T-cell (primary cell): ENCODE measurements at regions of chr17 and their contacts with region 1.

Region 1: DNA sequence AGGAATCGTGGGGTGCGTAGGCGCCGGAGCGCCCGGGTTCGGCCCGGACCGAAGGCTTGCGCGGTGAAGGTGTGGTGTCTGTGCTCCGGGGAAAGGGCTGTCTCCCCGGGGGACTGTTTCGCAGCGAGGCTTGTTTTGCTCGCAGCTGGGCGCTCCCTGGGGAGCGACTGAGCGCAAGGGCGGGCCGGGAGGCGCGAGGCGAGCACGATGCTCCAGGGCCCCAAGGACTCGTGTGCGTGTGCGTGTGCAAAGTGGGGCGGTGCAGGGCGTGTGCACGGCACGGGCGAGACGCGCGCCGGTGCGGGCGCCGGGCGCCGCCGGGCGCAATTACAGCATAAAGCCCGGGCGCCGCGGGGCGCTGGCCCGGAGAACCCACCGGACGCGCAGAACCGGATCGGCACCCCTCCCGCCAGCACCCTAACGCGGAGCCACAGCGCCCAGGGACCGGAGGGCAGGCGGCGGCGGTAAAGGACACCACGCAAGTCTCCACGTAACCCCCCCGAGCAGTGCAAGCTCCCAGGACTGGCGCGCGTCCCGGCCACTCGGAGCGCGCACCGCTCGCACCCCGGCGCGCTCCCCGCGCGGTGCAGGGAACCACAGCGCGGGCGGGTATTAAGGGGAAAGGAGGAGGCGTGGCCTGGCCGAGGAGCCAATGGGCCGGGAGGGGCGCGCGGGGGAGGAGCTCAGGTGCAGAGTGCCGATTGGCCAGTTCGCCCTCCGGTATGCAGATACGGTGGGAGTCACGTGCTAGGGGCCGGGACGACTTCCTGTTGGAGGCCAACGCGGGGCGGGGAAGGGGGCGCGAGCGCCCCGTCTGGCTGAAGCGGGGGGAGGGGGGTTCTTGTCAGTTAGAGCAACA is at the start of gene TNRC6C:
- DNase-seq: peak; percentile 99 to 100 (median 100)
- ATAC-seq: peak; percentile 83 to 95 (median 85)
- H3K4me3 ChIP-seq: peak within 1 kb of the TSS; percentile 92 to 94
- H3K4me3 Mint-ChIP-seq: peak within 1 kb of the TSS; percentile 94 to 100 (median 99)
- H3K27ac ChIP-seq: peak within 1 kb of the TSS; percentile 77
- H3K27ac Mint-ChIP-seq: peak within 1 kb of the TSS; percentile 92 to 98
- H3K4me1 ChIP-seq: peaks cover 18 to 37% of the 10 kb centered on the region in 2 experiments
- H3K4me1 Mint-ChIP-seq: peaks cover 38 to 49% (median 45%) of the 10 kb centered on the region in 3 donors
- H3K27me3 ChIP-seq: peaks cover 0 to 3% of the 10 kb centered on the region in 2 experiments
- H3K27me3 Mint-ChIP-seq: no peaks in the 10 kb centered on the region
- total RNA-seq, gene TNRC6C: 87.1 to 116 (median 94.3) TPM

Region 2: GRCh38 chr17:77391668-77392375 is 566.3 kb before region 1 on chr17:
- CTCF ChIA-PET with region 1: no interaction called
- POLR2A ChIA-PET with region 1: interaction called in 1 of 2 experiments, 10 read pairs
- DNase-seq: peak in 13 of 35 experiments; percentile 27 to 68 (median 32)
- ATAC-seq: peak; percentile 38 to 82 (median 74)
- H3K4me3 ChIP-seq: peak overlapping the region; percentile 2 to 58
- H3K4me3 Mint-ChIP-seq: peak overlapping the region; percentile 42 to 86 (median 62)
- H3K27ac ChIP-seq: peak overlapping the region; percentile 44
- H3K27ac Mint-ChIP-seq: peak overlapping the region; percentile 93 to 96
- H3K4me1 ChIP-seq: peaks cover 56 to 93% of the 10 kb centered on the region in 2 experiments
- H3K4me1 Mint-ChIP-seq: peaks cover 85 to 87% (median 86%) of the 10 kb centered on the region in 3 donors
- H3K27me3 ChIP-seq: no peaks in the 10 kb centered on the region
- H3K27me3 Mint-ChIP-seq: no peaks in the 10 kb centered on the region

Region 3: DNA sequence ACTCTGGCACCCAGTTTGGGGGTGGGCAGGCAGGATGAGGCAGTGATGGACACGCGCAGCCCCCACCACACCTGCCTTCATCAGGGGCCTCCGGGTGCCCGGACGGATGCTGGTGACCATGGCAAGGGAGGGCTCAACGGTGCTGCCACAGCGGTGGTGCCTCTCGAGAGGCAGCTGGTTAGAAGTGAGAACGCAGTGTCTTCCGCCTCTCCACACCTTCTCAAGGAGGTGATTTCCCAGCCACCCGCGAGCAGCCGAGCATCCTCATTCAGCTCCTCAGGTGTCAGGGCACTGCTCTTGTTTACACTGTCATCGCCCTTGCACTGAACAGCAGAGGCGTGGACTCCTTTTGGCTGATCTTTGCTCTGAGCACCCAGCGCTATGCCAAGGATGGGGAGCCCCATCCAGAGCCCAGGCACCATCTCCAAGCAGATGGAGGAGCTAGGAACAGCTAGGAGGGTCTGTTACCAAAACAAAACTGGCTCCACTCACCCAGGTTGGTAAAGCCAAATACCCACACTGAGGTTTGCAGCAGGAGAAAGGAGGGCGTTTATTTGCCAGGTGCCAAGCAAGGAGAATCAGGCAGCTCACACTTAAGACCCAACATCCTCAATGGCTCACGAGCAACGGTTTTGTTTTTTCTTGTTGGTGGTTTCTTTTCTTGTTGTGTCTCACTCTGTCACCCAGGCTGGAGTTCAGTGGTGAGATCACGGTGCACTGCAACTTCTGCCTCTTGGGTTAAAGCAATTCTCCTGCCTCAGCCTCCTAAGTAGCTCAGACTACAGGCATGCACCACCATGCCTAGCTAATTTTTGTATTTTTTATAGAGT is 173.9 kb before region 1 on chr17:
- CTCF ChIA-PET with region 1: interaction called in 1 of 2 experiments, 4 read pairs
- POLR2A ChIA-PET with region 1: interaction called, 6 to 15 read pairs
- DNase-seq: peak; percentile 42 to 91 (median 79)
- ATAC-seq: peak; percentile 86 to 97 (median 95)
- H3K4me3 ChIP-seq: peak overlapping the region in 1 of 2 donors; percentile 5
- H3K4me3 Mint-ChIP-seq: peak overlapping the region; percentile 37 to 64 (median 59)
- H3K27ac ChIP-seq: peak overlapping the region; percentile 95
- H3K27ac Mint-ChIP-seq: peak overlapping the region; percentile 89 to 98
- H3K4me1 ChIP-seq: peaks cover 2 to 44% of the 10 kb centered on the region in 2 experiments
- H3K4me1 Mint-ChIP-seq: peaks cover 11 to 29% (median 17%) of the 10 kb centered on the region in 3 donors
- H3K27me3 ChIP-seq: peaks cover 0 to 6% of the 10 kb centered on the region in 2 experiments
- H3K27me3 Mint-ChIP-seq: no peaks in the 10 kb centered on the region

Region 4: DNA sequence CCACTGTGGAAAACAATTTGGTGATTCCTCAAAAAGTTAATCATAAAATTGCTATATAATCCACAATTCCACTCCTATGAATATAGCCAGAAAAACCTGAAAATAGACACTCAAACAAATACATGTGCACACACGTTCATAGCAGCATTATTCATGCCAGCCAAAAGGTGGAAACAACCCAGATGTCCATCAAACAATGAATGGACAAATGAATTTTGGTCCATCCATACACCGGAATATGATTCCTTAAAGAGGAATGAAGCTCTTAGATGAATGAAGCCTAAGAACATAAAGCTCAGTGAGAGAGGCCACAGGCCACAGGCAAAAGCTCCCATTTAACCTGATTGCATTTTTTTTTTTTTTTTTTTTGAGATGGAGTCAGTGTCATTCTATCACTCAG is 114.2 kb before region 1 on chr17:
- CTCF ChIA-PET with region 1: interaction called in 1 of 2 experiments, 3 read pairs
- POLR2A ChIA-PET with region 1: interaction called, 3 to 16 read pairs
- DNase-seq: peak in 1 of 35 experiments; percentile 37
- ATAC-seq: peak in 2 of 4 experiments; percentile 2 to 15
- H3K4me3 ChIP-seq: no peak overlapping the region
- H3K4me3 Mint-ChIP-seq: peak overlapping the region; percentile 17 to 56 (median 28)
- H3K27ac ChIP-seq: peak overlapping the region; percentile 72
- H3K27ac Mint-ChIP-seq: peak overlapping the region; percentile 87 to 90
- H3K4me1 ChIP-seq: peaks cover 18 to 64% of the 10 kb centered on the region in 2 experiments
- H3K4me1 Mint-ChIP-seq: peaks cover 44 to 70% (median 45%) of the 10 kb centered on the region in 3 donors
- H3K27me3 ChIP-seq: no peaks in the 10 kb centered on the region
- H3K27me3 Mint-ChIP-seq: no peaks in the 10 kb centered on the region

Region 5: DNA sequence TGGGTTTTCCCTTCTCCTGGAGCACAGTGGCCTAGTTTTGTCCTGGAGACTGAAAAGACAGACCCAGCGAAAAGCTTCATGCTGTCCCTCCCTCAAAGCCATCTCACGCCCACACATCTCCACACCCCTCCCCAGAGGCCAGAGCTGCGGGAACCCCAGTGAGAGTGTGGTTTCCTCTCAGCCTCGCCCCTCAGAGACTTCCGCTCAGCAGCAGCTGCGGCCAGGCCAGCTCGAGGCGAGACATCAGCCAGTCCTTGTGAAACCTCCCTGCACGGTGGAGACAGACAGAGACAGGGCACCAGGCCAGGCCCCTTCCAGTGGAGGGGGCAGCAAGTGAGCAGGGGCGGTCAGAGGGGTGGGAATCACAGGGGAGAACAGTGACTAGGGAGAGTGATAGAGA is 76.5 kb before region 1 on chr17:
- CTCF ChIA-PET with region 1: interaction called in 1 of 2 experiments, 5 read pairs
- POLR2A ChIA-PET with region 1: interaction called, 6 to 11 read pairs
- DNase-seq: peak; percentile 56 to 85 (median 68)
- ATAC-seq: peak; percentile 19 to 71 (median 58)
- H3K4me3 ChIP-seq: peak overlapping the region; percentile 48 to 66
- H3K4me3 Mint-ChIP-seq: peak overlapping the region; percentile 73 to 87 (median 78)
- H3K27ac ChIP-seq: peak overlapping the region; percentile 99
- H3K27ac Mint-ChIP-seq: peak overlapping the region; percentile 95 to 98
- H3K4me1 ChIP-seq: peaks cover 49 to 87% of the 10 kb centered on the region in 2 experiments
- H3K4me1 Mint-ChIP-seq: peaks cover 89 to 98% (median 90%) of the 10 kb centered on the region in 3 donors
- H3K27me3 ChIP-seq: no peaks in the 10 kb centered on the region
- H3K27me3 Mint-ChIP-seq: no peaks in the 10 kb centered on the region

Region 6: DNA sequence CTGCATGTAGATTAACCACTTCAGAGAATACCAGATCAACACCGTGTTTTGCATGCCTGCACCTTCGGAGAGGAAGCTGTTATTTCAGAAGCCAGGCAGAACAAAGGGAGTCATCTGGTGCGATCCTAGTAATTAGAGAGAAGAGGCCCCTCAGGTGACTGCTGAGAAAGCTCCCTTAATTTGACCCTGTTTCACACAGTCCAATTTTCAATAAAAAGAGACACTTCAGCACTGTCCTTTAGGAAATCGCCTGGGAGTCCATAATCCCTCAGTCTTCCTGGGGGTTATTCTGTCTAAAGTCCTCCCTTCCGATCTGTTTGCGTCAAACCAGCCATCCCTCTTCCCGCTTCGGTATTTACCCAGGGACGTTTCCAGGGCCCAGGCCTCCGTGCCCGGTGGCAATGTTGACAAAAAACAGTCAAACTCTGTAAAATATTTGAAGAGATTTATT is 22.9 kb before region 1 on chr17:
- CTCF ChIA-PET with region 1: no interaction called
- POLR2A ChIA-PET with region 1: interaction called, 5 to 11 read pairs
- DNase-seq: peak in 6 of 35 experiments; percentile 2 to 43 (median 18)
- ATAC-seq: peak in 3 of 4 experiments; percentile 43 to 77 (median 56)
- H3K4me3 ChIP-seq: peak overlapping the region in 1 of 2 donors; percentile 10
- H3K4me3 Mint-ChIP-seq: peak overlapping the region in 2 of 3 donors; percentile 13 to 23
- H3K27ac ChIP-seq: no peak overlapping the region
- H3K27ac Mint-ChIP-seq: peak overlapping the region in 1 of 2 donors; percentile 48
- H3K4me1 ChIP-seq: peaks cover 6 to 10% of the 10 kb centered on the region in 2 experiments
- H3K4me1 Mint-ChIP-seq: peaks cover 25 to 41% (median 27%) of the 10 kb centered on the region in 3 donors
- H3K27me3 ChIP-seq: peaks cover 0 to 12% of the 10 kb centered on the region in 2 experiments
- H3K27me3 Mint-ChIP-seq: peaks cover 0 to 8% of the 10 kb centered on the region in 2 donors

Region 7: GRCh38 chr17:78013683-78014467 is 55.8 kb after region 1 on chr17:
- CTCF ChIA-PET with region 1: interaction called in 1 of 2 experiments, 12 read pairs
- POLR2A ChIA-PET with region 1: interaction called in 1 of 2 experiments, 4 read pairs
- DNase-seq: peak in 31 of 35 experiments; percentile 11 to 85 (median 41)
- ATAC-seq: peak; percentile 54 to 74 (median 58)
- H3K4me3 ChIP-seq: no peak overlapping the region
- H3K4me3 Mint-ChIP-seq: no peak overlapping the region
- H3K27ac ChIP-seq: no peak overlapping the region
- H3K27ac Mint-ChIP-seq: peak overlapping the region; percentile 20 to 45
- H3K4me1 ChIP-seq: peaks cover 0 to 3% of the 10 kb centered on the region in 2 experiments
- H3K4me1 Mint-ChIP-seq: peaks cover 37 to 38% (median 38%) of the 10 kb centered on the region in 3 donors
- H3K27me3 ChIP-seq: no peaks in the 10 kb centered on the region
- H3K27me3 Mint-ChIP-seq: no peaks in the 10 kb centered on the region

Region 8: DNA sequence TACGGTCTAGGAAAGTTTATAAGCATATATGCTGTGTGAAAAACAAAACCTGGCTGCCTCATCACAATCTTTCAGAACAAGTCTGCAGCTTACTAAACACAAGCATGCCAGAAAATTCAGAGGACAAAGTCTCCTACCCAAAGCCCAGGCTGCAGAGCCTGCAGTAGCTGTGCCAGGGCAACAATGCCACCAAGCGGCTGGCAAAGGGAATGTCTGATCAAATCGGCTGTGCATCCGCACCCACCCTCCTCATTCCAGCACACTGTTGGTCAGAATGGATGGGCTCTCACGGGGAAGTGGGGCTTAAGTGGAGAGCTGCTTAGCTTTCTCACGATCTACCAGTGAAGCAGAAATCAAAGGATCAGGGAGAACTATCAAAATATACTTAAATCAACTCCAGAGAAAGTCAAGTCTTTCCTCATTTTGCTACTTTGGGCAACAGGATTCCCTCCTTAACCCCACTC is 750.5 kb after region 1 on chr17:
- CTCF ChIA-PET with region 1: no interaction called
- POLR2A ChIA-PET with region 1: no interaction called
- DNase-seq: peak; percentile 27 to 76 (median 53)
- ATAC-seq: peak; percentile 73 to 83 (median 80)
- H3K4me3 ChIP-seq: no peak overlapping the region
- H3K4me3 Mint-ChIP-seq: peak overlapping the region in 2 of 3 donors; percentile 19 to 54
- H3K27ac ChIP-seq: peak overlapping the region; percentile 51
- H3K27ac Mint-ChIP-seq: peak overlapping the region; percentile 81 to 91
- H3K4me1 ChIP-seq: peaks cover 24 to 45% of the 10 kb centered on the region in 2 experiments
- H3K4me1 Mint-ChIP-seq: peaks cover 63 to 68% (median 67%) of the 10 kb centered on the region in 3 donors
- H3K27me3 ChIP-seq: no peaks in the 10 kb centered on the region
- H3K27me3 Mint-ChIP-seq: no peaks in the 10 kb centered on the region